Left cardiac atrium (tissue), 4 donors: ENCODE measurements at regions of chr20 and their contacts with region 1.

Region 1: DNA sequence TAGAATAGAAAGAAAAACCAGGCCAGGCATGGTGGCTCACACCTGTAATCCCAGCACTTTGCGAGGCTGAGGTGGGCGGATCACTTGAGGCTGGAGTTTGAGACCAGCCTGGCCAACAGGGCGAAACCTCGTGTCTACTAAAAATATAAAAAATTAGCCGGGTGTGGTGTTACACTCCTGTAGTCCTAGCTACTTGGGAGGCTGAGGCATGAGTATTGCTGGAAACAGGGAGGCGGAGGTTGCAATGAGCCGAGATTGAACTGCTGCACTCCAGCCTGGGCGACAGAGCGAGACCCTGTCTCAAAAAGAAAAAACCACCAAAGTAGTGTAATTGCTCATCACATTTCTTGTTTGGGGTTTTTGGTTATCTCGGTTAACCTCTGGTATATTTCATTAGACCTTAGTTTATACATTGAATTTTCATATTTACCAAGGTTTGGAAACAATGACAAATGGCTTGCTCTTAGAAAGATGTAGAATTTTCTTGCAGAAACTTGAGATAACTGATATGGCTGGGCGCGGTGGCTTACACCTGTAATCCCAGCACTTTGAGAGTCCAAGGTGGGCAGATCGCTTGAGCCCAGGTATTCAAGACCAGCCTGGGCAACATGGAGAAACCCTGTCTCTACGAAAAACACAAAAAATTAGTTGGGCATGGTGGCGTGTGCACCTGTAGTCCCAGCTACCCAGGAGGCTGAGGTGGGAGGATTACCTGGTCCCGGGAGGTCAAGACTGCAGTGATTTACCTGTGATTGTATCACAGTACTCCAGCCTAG is 14.2 kb downstream of the ITCH start:
- DNase-seq: no peak
- ATAC-seq: no peak

Region 2: DNA sequence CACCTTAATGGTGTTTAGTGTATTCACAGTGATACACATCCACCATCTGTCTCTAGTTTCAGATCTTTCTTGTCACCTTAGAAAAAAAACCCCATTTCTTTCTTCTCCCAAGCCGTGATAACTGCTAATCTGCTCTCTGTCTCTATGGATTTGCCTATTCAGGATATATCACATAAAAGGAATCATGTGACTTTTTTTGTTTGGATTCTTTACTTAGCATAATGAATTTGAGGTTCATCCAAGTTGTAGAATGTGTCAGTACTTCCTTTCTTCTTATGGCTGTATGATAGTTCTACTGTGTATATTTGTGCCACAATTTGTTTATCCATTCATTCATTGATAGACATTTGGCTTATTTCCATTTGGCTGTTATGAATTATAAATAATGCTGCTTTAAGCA is 42.9 kb after region 1 on chr20:
- intact Hi-C with region 1: loop called in 1 of 2 experiments (anchors 2 kb)
- DNase-seq: no peak
- ATAC-seq: no peak